ENCODE measurements at regions of chr11 and their contacts with region 1.

Region 1: DNA sequence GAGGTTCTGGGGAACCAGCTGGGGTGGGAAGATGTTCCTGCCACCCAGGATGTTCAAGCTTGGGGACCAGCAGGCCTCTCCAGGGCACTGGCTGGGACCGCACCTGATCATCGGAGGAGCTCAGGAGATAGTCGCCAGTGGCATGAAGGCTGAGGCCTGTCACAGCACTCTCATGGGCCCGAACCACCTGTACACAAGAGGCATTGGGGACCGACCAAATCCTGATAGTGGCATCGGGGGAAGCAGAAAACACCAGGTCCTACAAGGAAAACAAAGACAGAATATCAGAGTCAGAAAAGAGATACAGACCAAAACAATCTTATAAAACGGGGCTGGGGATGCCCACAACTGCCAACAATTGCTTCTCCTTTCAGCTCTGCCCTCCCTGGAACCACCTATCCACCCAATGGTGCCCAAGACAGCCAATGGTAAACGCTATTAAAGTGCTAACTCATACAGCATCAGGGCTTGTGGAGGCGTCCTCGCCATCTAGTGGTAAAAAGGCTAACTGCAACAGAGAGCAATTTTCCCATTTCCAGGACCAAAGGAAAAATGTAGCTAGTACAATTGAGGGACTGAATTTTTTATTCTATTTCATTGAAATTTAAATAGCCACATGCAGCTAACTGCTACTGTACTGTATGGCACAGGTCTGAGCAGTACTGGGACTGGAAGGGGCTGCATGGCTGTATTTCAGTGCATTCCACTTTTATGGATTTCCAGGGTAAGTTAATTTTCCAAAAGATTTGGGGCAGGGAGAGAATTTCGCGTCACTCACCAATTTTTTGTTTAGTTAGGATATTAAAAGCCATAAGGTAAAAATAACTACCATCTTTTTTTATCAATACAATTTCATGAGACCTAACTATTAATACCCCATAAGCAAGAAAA is 7.1 kb downstream of the PRPF19 start:
- DNase-seq: peak; percentile 62
- H3K4me3 ChIP-seq: no peak overlapping the region
- H3K27ac ChIP-seq: no peak overlapping the region
- H3K4me1 ChIP-seq: no peaks in the 10 kb centered on the region
- H3K27me3 ChIP-seq: no peaks in the 10 kb centered on the region
- CTCF ChIP-seq: peak; percentile 97

Region 2: GRCh38 chr11:60775420-60775961 is 123.8 kb before region 1 on chr11:
- intact Hi-C with region 1: loop called (anchors 5 kb)
- DNase-seq: peak; percentile 84
- H3K4me3 ChIP-seq: no peak overlapping the region
- H3K27ac ChIP-seq: no peak overlapping the region
- H3K4me1 ChIP-seq: no peaks in the 10 kb centered on the region
- H3K27me3 ChIP-seq: no peaks in the 10 kb centered on the region
- CTCF ChIP-seq: peak; percentile 97

Measured in colonic mucosa (tissue), 4 donors.